Natural killer cell (primary cell): ENCODE measurements at regions of chr17 and their contacts with region 1.

Region 1: GRCh38 chr17:74744714-74745547 is 3.5 kb upstream of the NHERF1 start:
- DNase-seq: peak; percentile 88 to 89
- ATAC-seq: peak; percentile 39 to 64 (median 49)
- H3K4me3 ChIP-seq: no peak overlapping the region
- H3K4me3 Mint-ChIP-seq: peak overlapping the region; percentile 80
- H3K27ac ChIP-seq: no peak overlapping the region
- H3K27ac Mint-ChIP-seq: peak overlapping the region; percentile 90 to 93
- H3K4me1 ChIP-seq: peaks cover 79% of the 10 kb centered on the region
- H3K4me1 Mint-ChIP-seq: peaks cover 51 to 70% of the 10 kb centered on the region in 2 donors
- H3K27me3 ChIP-seq: no peaks in the 10 kb centered on the region
- H3K27me3 Mint-ChIP-seq: no peaks in the 10 kb centered on the region
- CTCF ChIP-seq: peak; percentile 100

Region 2: DNA sequence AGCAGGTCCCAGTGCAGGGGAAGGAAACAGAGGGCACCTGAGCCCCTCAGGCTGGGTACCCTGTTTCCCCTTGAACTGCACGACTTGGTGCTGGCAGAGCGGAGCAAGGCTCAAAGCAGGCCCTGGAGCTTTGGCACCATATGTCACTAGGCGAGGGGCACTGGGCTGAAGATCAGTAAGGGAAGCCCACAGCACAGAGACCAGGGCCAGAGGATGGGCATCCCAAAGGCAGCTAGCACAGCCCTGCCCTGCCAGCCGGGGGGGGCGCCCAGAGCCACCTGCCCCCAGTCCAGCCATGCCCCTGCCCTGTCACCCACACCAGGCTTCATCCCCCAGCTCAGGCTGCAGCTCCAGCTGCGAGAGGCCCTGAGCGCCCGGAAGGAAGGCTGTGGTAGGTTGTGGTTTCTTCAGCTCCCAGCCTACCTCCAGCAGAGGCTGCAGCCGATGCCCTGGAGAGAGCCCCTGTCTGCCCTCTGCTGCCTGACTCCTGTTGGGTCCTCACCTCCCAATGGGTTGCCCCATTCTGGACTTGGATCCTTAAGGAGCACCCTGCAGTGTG is 14.4 kb after region 1 on chr17:
- intact Hi-C with region 1: loop called (anchors 2 kb)
- DNase-seq: peak; percentile 45 to 82
- ATAC-seq: peak; percentile 72 to 89 (median 77)
- H3K4me3 ChIP-seq: peak overlapping the region; percentile 17
- H3K4me3 Mint-ChIP-seq: peak overlapping the region; percentile 86
- H3K27ac ChIP-seq: peak overlapping the region; percentile 32
- H3K27ac Mint-ChIP-seq: peak overlapping the region; percentile 85 to 92
- H3K4me1 ChIP-seq: peaks cover 97% of the 10 kb centered on the region
- H3K4me1 Mint-ChIP-seq: peaks cover 72 to 83% of the 10 kb centered on the region in 2 donors
- H3K27me3 ChIP-seq: no peaks in the 10 kb centered on the region
- H3K27me3 Mint-ChIP-seq: no peaks in the 10 kb centered on the region
- CTCF ChIP-seq: no peak

Region 3: DNA sequence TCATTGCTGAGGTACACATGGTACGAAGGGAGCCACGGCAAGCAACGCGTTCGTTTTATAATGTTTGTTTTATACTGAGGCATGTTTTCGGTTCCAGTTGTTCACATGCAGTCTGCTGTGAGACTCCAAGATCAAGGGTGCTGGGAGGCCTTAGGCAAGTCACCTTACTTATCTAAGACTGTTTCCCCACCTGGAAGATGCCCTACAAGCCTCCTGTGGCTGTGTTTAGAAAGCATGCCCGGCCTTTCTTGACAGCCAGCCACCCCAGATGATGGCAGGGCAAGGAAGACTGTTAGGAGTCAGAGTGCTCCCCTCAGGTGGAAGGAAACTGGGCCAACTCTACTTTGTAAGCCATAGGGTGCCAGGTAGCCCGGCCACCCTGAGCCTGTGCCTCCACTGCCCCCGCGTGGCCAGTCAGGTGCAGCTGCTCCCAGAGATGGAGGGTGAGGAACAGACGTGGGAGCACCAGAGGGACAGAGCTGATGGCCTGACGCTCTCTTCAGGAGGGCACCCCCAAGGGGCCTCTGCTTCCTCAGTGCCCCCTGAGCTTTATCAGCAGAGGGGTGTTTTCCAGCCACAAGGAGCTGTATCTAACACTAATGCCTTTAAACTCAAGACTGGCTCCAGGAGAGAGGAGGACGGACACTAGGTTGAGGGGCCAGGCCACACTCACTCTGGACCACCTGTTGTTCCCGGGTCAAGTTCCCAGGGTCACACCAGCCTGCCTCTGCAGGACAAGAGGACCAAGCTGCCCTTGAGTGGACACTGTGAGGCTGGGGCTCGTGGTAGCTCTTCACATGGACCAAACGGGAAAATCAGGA is 25.8 kb after region 1 on chr17:
- intact Hi-C with region 1: loop called (anchors 1 kb)
- DNase-seq: peak; percentile 67 to 87
- ATAC-seq: peak; percentile 86 to 96 (median 95)
- H3K4me3 ChIP-seq: no peak overlapping the region
- H3K4me3 Mint-ChIP-seq: peak overlapping the region; percentile 13
- H3K27ac ChIP-seq: no peak overlapping the region
- H3K27ac Mint-ChIP-seq: peak overlapping the region; percentile 82 to 84
- H3K4me1 ChIP-seq: peaks cover 46% of the 10 kb centered on the region
- H3K4me1 Mint-ChIP-seq: peaks cover 27 to 45% of the 10 kb centered on the region in 2 donors
- H3K27me3 ChIP-seq: no peaks in the 10 kb centered on the region
- H3K27me3 Mint-ChIP-seq: no peaks in the 10 kb centered on the region
- CTCF ChIP-seq: peak; percentile 76

Region 4: GRCh38 chr17:74780443-74781238 is 35.7 kb after region 1 on chr17:
- intact Hi-C with region 1: loop called (anchors 1 kb)
- DNase-seq: peak; percentile 35 to 67
- ATAC-seq: peak; percentile 57 to 61 (median 61)
- H3K4me3 ChIP-seq: no peak overlapping the region
- H3K4me3 Mint-ChIP-seq: peak overlapping the region; percentile 71
- H3K27ac ChIP-seq: peak overlapping the region; percentile 62
- H3K27ac Mint-ChIP-seq: peak overlapping the region; percentile 86 to 92
- H3K4me1 ChIP-seq: peaks cover 56% of the 10 kb centered on the region
- H3K4me1 Mint-ChIP-seq: peaks cover 40 to 46% of the 10 kb centered on the region in 2 donors
- H3K27me3 ChIP-seq: no peaks in the 10 kb centered on the region
- H3K27me3 Mint-ChIP-seq: no peaks in the 10 kb centered on the region
- CTCF ChIP-seq: peak; percentile 69

Region 5: GRCh38 chr17:74852237-74853047 is 107.5 kb after region 1 on chr17:
- intact Hi-C with region 1: no loop called
- DNase-seq: peak in 1 of 2 donors; percentile 83
- ATAC-seq: peak in 2 of 3 donors; percentile 59 to 66
- H3K4me3 ChIP-seq: no peak overlapping the region
- H3K4me3 Mint-ChIP-seq: peak overlapping the region; percentile 37
- H3K27ac ChIP-seq: no peak overlapping the region
- H3K27ac Mint-ChIP-seq: no peak overlapping the region
- H3K4me1 ChIP-seq: peaks cover 8% of the 10 kb centered on the region
- H3K4me1 Mint-ChIP-seq: peaks cover 0 to 18% of the 10 kb centered on the region in 2 donors
- H3K27me3 ChIP-seq: peaks cover 30% of the 10 kb centered on the region
- H3K27me3 Mint-ChIP-seq: peaks cover 44 to 52% of the 10 kb centered on the region in 2 donors
- CTCF ChIP-seq: no peak

Region 6: DNA sequence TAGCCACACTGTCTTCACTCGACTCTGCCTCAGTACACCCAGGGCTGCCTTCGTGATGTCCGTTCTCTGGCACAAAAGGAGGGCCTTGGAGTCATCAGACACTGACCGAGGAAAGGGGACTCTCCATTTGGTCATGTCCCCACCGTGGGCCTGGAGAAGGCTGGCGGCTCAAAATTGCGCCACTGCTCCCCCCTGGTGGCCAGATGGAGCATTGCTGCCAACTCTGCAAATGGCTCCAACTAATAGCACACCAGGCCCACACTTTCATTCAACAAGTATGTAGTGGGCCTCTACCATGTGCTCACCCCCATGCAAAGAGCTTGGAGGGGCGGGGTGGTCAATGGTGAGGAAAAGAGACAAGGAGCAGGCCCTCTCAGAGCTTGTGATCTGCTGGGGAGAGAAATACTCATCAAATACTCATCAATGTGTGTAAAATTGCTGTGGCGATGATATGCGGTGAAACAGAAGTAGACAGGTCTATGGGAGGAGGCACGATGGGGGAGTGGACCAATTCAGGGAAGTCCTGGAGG is 120.0 kb after region 1 on chr17:
- intact Hi-C with region 1: loop called (anchors 1 kb)
- DNase-seq: peak; percentile 70 to 84
- ATAC-seq: peak; percentile 74 to 90 (median 76)
- H3K4me3 ChIP-seq: no peak overlapping the region
- H3K4me3 Mint-ChIP-seq: peak overlapping the region; percentile 13
- H3K27ac ChIP-seq: no peak overlapping the region
- H3K27ac Mint-ChIP-seq: no peak overlapping the region
- H3K4me1 ChIP-seq: peaks cover 24% of the 10 kb centered on the region
- H3K4me1 Mint-ChIP-seq: peaks cover 6 to 27% of the 10 kb centered on the region in 2 donors
- H3K27me3 ChIP-seq: peaks cover 19% of the 10 kb centered on the region
- H3K27me3 Mint-ChIP-seq: peaks cover 0 to 23% of the 10 kb centered on the region in 2 donors
- CTCF ChIP-seq: peak; percentile 88